Colonic mucosa (tissue), 4 donors: ENCODE measurements at regions of chr22 and their contacts with region 1.

Region 1: GRCh38 chr22:44486538-44486937 is 11.5 kb downstream of the RTL6 start:
- DNase-seq: no peak
- H3K4me3 ChIP-seq: no peak overlapping the region
- H3K27ac ChIP-seq: no peak overlapping the region
- H3K4me1 ChIP-seq: no peaks in the 10 kb centered on the region
- H3K27me3 ChIP-seq: no peaks in the 10 kb centered on the region
- CTCF ChIP-seq: no peak

Region 2: GRCh38 chr22:44444341-44445301 is 41.9 kb before region 1 on chr22:
- intact Hi-C with region 1: loop called (anchors 5 kb)
- DNase-seq: no peak
- H3K4me3 ChIP-seq: no peak overlapping the region
- H3K27ac ChIP-seq: no peak overlapping the region
- H3K4me1 ChIP-seq: no peaks in the 10 kb centered on the region
- H3K27me3 ChIP-seq: no peaks in the 10 kb centered on the region
- CTCF ChIP-seq: no peak

Region 3: GRCh38 chr22:44538051-44538450 is 51.5 kb after region 1 on chr22:
- intact Hi-C with region 1: no loop called
- DNase-seq: no peak
- H3K4me3 ChIP-seq: no peak overlapping the region
- H3K27ac ChIP-seq: no peak overlapping the region
- H3K4me1 ChIP-seq: no peaks in the 10 kb centered on the region
- H3K27me3 ChIP-seq: no peaks in the 10 kb centered on the region
- CTCF ChIP-seq: no peak